PC-3 (cell line): ENCODE measurements at regions of chr2 and their contacts with region 1.

Region 1: DNA sequence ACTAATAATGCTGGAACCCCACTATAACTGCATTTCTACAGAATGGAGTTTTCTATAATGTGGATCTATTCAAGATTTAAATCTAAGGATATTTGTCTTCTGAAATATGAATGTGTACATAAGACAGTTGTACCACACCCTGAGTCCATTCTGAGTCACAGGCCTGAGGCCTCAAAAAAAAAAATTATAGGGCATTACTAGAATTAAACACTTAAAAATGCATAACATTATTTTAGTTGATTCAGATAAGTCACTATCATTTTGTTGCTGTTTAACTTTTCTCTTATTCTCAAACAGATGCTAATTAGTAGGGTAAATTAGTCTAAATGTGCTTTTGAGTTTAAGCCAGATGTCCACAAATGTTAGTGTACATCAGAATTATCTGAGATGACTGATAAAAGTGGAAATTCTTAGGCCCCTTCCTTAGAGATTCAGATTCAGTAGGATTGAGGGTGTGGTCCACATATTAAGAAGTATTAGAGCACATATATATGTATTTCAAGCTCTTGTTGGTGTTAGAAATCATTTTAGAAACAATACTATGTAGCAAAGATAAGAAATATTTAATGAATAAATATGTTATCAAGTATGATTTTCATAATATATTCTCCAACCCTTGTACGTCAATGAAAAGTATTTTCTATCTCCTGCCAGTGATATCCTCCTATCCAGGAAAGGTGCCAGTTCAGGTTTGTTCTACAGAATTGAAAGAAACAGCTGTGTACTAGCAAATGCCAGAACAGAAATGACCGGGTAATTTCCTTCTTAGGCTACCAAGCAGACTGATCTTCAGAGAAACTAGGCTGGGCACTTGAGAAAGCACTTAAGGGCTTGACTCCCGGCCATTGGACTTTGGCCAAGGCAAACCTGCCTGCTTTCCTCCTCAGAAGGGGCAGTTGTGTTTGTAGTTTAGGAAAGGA is 42.6 kb upstream of the COL5A2 start:
- DNase-seq: peak; percentile 94
- ATAC-seq: peak; percentile 42
- H3K4me3 ChIP-seq: peak overlapping the region; percentile 67
- H3K27ac ChIP-seq: peak overlapping the region; percentile 90
- H3K4me1 ChIP-seq: peaks cover 73% of the 10 kb centered on the region
- H3K27me3 ChIP-seq: no peaks in the 10 kb centered on the region
- CTCF ChIP-seq: no peak

Region 2: GRCh38 chr2:189115126-189115525 is 107.0 kb before region 1 on chr2:
- CTCF ChIA-PET with region 1: no interaction called
- POLR2A ChIA-PET with region 1: interaction called, 6 read pairs
- intact Hi-C with region 1: loop called (anchors 2 kb)
- DNase-seq: peak; percentile 57
- ATAC-seq: peak; percentile 33
- H3K4me3 ChIP-seq: no peak overlapping the region
- H3K27ac ChIP-seq: peak overlapping the region; percentile 15; the same call in 1 of the 2 replicates
- H3K4me1 ChIP-seq: peaks cover 18% of the 10 kb centered on the region
- H3K27me3 ChIP-seq: no peaks in the 10 kb centered on the region
- CTCF ChIP-seq: peak; percentile 59

Region 3: DNA sequence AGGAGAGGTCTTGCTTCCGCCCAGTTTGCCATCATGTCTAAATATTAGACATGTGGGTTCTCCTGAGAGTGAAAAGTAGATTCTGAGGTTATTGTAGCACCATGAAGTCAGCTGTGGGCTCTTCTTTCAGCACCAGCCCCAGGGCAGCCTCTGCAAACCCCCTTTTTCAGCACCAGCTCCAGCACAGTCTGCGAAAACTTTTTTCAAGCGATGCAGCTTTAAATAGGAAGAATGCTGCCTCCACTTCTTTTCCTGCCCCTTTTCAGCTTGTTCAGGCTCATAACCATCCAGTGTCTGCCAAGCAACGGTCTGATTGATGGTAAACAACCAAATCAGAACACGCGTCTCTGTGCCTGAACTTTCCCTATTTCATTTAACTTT is 42.6 kb before region 1 on chr2 and contains the start of gene COL5A2:
- CTCF ChIA-PET with region 1: no interaction called
- POLR2A ChIA-PET with region 1: no interaction called
- intact Hi-C with region 1: loop called (anchors 5 kb)
- DNase-seq: no peak
- ATAC-seq: no peak
- H3K4me3 ChIP-seq: no peak within 1 kb of the TSS
- H3K27ac ChIP-seq: no peak within 1 kb of the TSS
- H3K4me1 ChIP-seq: peaks cover 4% of the 10 kb centered on the region; the same call in 1 of the 2 replicates
- H3K27me3 ChIP-seq: no peaks in the 10 kb centered on the region
- CTCF ChIP-seq: no peak
- total RNA-seq, gene COL5A2: 56.2 and 60.1 TPM in 2 replicates

Region 4: GRCh38 chr2:189210250-189211075 is 11.7 kb before region 1 on chr2:
- CTCF ChIA-PET with region 1: interaction called, 7 read pairs
- POLR2A ChIA-PET with region 1: no interaction called
- intact Hi-C with region 1: loop called (anchors 1 kb)
- DNase-seq: peak; percentile 85
- ATAC-seq: peak; percentile 66
- H3K4me3 ChIP-seq: peak overlapping the region; percentile 55
- H3K27ac ChIP-seq: peak overlapping the region; percentile 94
- H3K4me1 ChIP-seq: peaks cover 56% of the 10 kb centered on the region
- H3K27me3 ChIP-seq: no peaks in the 10 kb centered on the region
- CTCF ChIP-seq: no peak

Region 5: DNA sequence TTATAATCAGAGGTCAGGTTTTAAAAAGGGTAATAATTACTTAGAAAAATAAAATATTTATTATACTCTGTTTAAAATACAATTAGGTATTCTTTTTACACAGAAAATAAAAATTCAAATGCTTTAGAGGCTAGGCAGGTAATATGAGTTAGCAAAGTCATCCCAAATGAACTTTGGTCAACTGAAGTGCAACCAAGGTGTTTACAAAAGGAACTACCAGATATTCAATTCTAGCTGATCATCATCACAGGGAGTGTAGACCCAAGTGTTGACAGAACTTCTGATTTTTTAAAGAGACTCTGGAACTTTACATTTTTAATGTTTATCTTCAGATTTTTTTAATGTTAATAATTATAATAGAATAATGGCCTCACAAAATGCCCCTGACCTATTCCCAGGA is 16.8 kb after region 1 on chr2:
- CTCF ChIA-PET with region 1: no interaction called
- POLR2A ChIA-PET with region 1: no interaction called
- intact Hi-C with region 1: no loop called
- DNase-seq: no peak
- ATAC-seq: no peak
- H3K4me3 ChIP-seq: no peak overlapping the region
- H3K27ac ChIP-seq: no peak overlapping the region
- H3K4me1 ChIP-seq: peaks cover 4% of the 10 kb centered on the region; the same call in 1 of the 2 replicates
- H3K27me3 ChIP-seq: no peaks in the 10 kb centered on the region
- CTCF ChIP-seq: no peak

Region 6: GRCh38 chr2:189261431-189261841 is 39.3 kb after region 1 on chr2:
- CTCF ChIA-PET with region 1: no interaction called
- POLR2A ChIA-PET with region 1: no interaction called
- intact Hi-C with region 1: loop called (anchors 1 kb)
- DNase-seq: peak; percentile 97
- ATAC-seq: peak; percentile 96
- H3K4me3 ChIP-seq: no peak overlapping the region
- H3K27ac ChIP-seq: peak overlapping the region; percentile 73
- H3K4me1 ChIP-seq: peaks cover 13% of the 10 kb centered on the region
- H3K27me3 ChIP-seq: no peaks in the 10 kb centered on the region
- CTCF ChIP-seq: no peak

Region 7: GRCh38 chr2:189347540-189347939 is 125.4 kb after region 1 on chr2:
- CTCF ChIA-PET with region 1: no interaction called
- POLR2A ChIA-PET with region 1: no interaction called
- intact Hi-C with region 1: loop called (anchors 5 kb)
- DNase-seq: peak; percentile 94
- ATAC-seq: peak; percentile 94
- H3K4me3 ChIP-seq: peak overlapping the region; percentile 29; the same call in 1 of the 2 replicates
- H3K27ac ChIP-seq: peak overlapping the region; percentile 79
- H3K4me1 ChIP-seq: peaks cover 32% of the 10 kb centered on the region
- H3K27me3 ChIP-seq: no peaks in the 10 kb centered on the region
- CTCF ChIP-seq: peak; percentile 67

Region 8: DNA sequence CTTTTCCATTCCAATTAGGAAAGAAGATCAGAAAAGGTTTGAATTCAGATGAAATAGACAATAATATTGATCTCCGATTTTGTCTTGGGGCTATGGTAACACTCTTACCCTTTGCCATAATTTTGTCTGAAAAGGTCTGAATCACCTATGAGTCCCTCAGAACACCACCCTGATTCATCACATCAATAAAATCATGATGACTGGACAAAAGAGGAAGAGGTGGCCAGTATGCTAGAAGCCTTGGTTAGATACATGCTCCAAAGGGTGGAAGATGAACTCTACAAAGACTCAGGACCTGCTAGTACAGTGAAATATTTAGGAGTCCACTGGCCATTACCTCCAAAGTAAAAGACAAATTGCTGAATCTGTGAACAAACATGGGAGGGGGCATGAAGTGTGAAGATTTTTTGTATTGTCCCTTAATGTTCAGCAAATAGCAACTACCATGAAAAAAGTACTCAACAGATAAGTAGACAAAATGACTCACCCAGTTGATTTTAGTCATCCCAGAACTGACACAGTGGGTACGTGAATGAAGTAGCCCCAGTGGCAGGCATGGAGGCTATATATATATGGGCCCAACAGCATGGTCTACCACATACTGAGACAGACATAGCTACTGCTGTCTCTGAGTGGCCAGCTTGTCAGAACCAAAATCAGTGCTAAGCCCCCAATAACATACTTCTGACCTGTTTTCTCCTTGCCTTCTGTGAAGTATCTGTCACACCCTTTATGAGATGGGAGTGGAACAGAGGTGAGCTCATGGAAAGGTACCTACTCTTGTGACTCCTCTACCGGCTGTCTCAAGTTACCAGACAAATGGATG is 1622.0 kb after region 1 on chr2:
- CTCF ChIA-PET with region 1: no interaction called
- POLR2A ChIA-PET with region 1: no interaction called
- intact Hi-C with region 1: loop called (anchors 5 kb)
- DNase-seq: peak; percentile 95
- ATAC-seq: peak; percentile 76
- H3K4me3 ChIP-seq: peak overlapping the region; percentile 61
- H3K27ac ChIP-seq: peak overlapping the region; percentile 99
- H3K4me1 ChIP-seq: peaks cover 89% of the 10 kb centered on the region
- H3K27me3 ChIP-seq: no peaks in the 10 kb centered on the region
- CTCF ChIP-seq: no peak